Lower leg skin (tissue), 4 donors: ENCODE measurements at regions of chr5 and their contacts with region 1.

Region 1: GRCh38 chr5:103041071-103041676 is 78.8 kb downstream of the GIN1 start:
- DNase-seq: no peak
- H3K4me3 ChIP-seq: no peak overlapping the region
- CTCF ChIP-seq: no peak
- POLR2A ChIP-seq: no peak

Region 2: DNA sequence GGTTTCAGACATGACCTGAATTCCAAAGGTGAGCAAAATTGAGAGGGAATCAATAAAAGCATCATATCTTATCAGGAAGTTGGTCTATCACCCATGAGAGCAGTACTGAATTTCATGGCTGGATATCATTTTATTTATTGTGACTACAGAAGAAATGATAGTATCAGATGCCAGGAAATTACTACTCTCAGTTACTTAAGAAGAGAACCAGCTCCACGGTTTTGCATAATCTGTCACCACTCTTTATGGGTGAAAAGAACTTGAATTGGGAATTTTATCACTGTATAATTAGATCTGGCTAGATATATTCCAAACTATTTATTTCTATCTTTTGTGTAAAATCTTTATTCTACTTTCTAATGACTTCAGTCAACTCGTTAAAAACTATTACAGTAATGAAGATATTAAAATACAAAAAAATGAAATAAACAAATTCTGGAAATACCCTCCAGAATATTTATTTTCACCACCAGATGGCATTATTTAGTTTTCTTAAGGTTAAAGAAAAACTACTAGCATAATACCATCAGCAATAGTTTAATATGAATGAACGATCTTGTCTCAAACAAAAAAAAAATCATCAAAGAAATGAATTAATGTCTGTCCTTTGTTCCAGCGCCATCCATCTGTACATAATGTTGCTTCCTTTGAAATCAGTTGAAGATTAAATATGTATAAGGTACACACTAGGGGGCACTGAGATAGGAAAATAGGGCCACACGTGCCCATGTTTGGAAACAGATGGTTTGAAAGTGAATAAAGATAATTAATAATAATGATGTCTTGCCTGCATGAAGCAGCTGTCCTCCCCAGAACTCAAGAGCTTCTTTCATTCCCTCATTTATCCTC is 457.7 kb before region 1 on chr5:
- intact Hi-C with region 1: loop called (anchors 10 kb)
- DNase-seq: no peak
- H3K4me3 ChIP-seq: no peak overlapping the region
- CTCF ChIP-seq: no peak
- POLR2A ChIP-seq: no peak